Activated T-helper 2 cell treated with anti-CD3 and anti-CD28 coated beads, Interferon-gamma antibody, Interleukin-2, Interleukin-4, amounts not matched to agents 10 μg/mL and 5 μg/mL and 100 μg/mL, durations not matched to agents 14 hours and 24 hours and 36 hours (primary cell): ENCODE measurements at regions of chr6 and their contacts with region 1.

Region 1: DNA sequence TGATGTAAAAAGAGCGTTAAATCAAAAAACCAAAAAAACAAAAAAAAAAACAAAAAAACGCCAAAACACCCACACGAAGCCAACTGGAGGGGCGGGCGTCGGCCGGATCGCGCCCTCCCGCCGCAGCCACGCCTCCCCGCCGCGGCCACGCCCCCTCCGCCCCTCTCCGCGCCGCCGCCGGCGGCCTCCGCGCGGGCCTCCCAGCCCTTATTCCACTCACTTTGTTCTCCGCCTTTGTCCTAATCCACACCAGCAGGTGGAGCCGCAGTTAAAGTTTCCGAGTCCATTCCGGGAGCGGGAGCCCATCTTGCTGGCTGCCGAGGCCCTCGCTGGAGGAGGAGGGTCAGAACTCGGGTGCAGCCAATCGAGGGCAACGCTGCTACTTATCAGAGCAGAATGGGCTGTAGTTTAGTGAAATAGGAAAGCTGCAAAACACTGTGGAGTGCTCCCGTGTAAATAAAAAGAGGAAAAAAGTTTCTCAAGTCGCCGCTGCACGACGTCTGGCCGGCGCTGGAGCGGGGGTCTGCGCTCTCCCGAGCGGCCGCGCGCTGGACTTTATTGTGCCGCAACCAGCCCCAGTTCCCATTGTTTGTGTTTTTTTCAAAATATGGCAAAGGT is at the start of gene ASF1A:
- DNase-seq: peak; percentile 96
- H3K4me3 Mint-ChIP-seq: peak within 1 kb of the TSS; percentile 88
- H3K27ac Mint-ChIP-seq: peak within 1 kb of the TSS; percentile 96
- H3K4me1 Mint-ChIP-seq: peaks cover 48% of the 10 kb centered on the region
- H3K27me3 Mint-ChIP-seq: no peaks in the 10 kb centered on the region
- total RNA-seq, gene ASF1A: 33.9 and 34.1 TPM in 2 replicates

Region 2: GRCh38 chr6:118283766-118284165 is 610.1 kb before region 1 on chr6:
- intact Hi-C with region 1: loop called (anchors 10 kb)
- DNase-seq: no peak
- H3K4me3 Mint-ChIP-seq: no peak overlapping the region
- H3K27ac Mint-ChIP-seq: no peak overlapping the region
- H3K4me1 Mint-ChIP-seq: peaks cover 6% of the 10 kb centered on the region
- H3K27me3 Mint-ChIP-seq: peaks cover 26% of the 10 kb centered on the region

Region 3: DNA sequence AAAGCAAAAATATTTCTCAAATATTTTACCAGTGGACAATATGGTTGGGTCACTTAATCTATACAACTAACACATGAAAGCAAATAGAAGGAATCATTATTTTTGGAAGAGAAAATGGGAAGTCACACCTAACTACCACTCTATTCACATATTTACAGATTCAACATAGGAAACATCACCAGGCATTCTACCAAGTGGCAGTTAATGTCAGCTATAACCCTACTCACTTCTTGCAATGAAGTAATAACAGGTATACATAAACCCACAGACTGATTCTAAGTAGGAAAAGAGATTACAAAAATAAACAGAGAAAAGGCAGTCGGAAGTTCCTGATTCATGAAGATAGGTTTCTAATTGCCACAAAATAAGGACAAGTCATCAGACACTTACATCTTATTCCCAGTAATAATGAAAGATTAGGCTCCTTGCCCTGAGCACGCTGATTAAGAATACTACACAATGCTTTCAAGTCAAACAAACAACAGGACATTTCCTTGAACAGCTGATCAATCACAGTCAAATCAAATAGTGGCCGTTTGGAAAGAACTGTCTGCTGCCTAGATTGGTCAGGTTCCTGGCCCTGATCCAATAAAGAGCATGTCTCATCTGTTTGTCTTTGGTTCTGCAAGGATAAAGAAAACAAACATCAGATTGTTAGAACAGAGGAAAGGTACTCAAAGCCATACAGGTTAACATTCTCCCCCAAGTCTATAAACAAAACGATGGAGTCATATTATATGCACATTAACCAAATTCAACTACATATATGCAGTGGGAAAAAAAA is 425.0 kb before region 1 on chr6:
- intact Hi-C with region 1: no loop called
- DNase-seq: no peak
- H3K4me3 Mint-ChIP-seq: no peak overlapping the region
- H3K27ac Mint-ChIP-seq: no peak overlapping the region
- H3K4me1 Mint-ChIP-seq: peaks cover 6% of the 10 kb centered on the region
- H3K27me3 Mint-ChIP-seq: no peaks in the 10 kb centered on the region

Region 4: GRCh38 chr6:118709859-118710350 is 184.0 kb before region 1 on chr6:
- intact Hi-C with region 1: loop called (anchors 1 kb)
- DNase-seq: peak; percentile 73
- H3K4me3 Mint-ChIP-seq: peak overlapping the region; percentile 97
- H3K27ac Mint-ChIP-seq: peak overlapping the region; percentile 96
- H3K4me1 Mint-ChIP-seq: peaks cover 77% of the 10 kb centered on the region
- H3K27me3 Mint-ChIP-seq: no peaks in the 10 kb centered on the region

Region 5: GRCh38 chr6:118864341-118865099 is 29.4 kb before region 1 on chr6:
- intact Hi-C with region 1: loop called (anchors 2 kb)
- DNase-seq: no peak
- H3K4me3 Mint-ChIP-seq: no peak overlapping the region
- H3K27ac Mint-ChIP-seq: peak overlapping the region; percentile 6
- H3K4me1 Mint-ChIP-seq: peaks cover 35% of the 10 kb centered on the region
- H3K27me3 Mint-ChIP-seq: no peaks in the 10 kb centered on the region

Region 6: GRCh38 chr6:119110601-119111548 is 217.0 kb after region 1 on chr6:
- intact Hi-C with region 1: loop called (anchors 5 kb)
- DNase-seq: peak; percentile 26
- H3K4me3 Mint-ChIP-seq: no peak overlapping the region
- H3K27ac Mint-ChIP-seq: no peak overlapping the region
- H3K4me1 Mint-ChIP-seq: peaks cover 16% of the 10 kb centered on the region
- H3K27me3 Mint-ChIP-seq: peaks cover 6% of the 10 kb centered on the region